ENCODE measurements at regions of chr5 and their contacts with region 1.

Region 1: DNA sequence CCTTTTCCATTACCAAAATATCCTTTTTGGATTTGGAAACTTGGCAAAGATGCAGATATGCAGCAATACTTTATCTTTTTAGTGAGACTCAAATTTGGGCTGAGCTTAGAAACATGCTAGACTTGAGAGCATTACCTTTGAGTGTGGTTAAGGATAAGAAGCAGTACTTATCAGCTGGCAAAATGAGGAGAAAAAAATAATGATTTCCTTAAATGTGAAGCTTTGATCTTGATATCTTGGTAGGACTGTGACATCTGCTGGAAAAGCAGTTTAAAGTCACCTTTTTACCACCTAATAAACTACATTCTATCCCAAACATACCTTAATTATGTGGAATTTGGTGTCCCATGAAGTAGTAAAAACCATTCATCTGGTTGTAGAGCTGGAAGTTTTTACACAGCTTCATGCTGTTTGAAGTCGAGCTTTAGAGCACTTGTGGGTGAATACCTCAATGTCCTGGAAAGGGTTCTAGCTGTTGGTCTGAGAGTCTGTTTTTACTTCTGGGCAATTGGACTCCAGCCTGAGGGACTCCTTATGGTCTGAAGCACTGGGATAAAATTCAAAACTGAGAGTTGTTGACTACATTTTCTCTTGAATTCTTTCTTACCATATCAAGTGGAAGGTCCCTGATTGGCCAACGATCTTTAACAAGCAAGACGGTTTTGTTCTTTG is 53.4 kb downstream of the LRRC70 start:
- DNase-seq: peak in 1 of 5 donors; percentile 2
- H3K4me3 ChIP-seq: no peak overlapping the region
- H3K4me3 Mint-ChIP-seq: no peak overlapping the region
- H3K27ac ChIP-seq: no peak overlapping the region
- H3K27ac Mint-ChIP-seq: peak overlapping the region in 1 of 7 donors; percentile 56
- H3K4me1 ChIP-seq: no peaks in the 10 kb centered on the region
- H3K4me1 Mint-ChIP-seq: no peaks in the 10 kb centered on the region
- H3K27me3 ChIP-seq: no peaks in the 10 kb centered on the region
- H3K27me3 Mint-ChIP-seq: no peaks in the 10 kb centered on the region

Region 2: GRCh38 chr5:62547945-62548630 is 84.0 kb before region 1 on chr5:
- CTCF ChIA-PET with region 1: no interaction called
- POLR2A ChIA-PET with region 1: no interaction called
- intact Hi-C with region 1: loop called (anchors 10 kb)
- DNase-seq: no peak
- H3K4me3 ChIP-seq: no peak overlapping the region
- H3K4me3 Mint-ChIP-seq: no peak overlapping the region
- H3K27ac ChIP-seq: no peak overlapping the region
- H3K27ac Mint-ChIP-seq: peak overlapping the region in 2 of 7 donors; percentile 44 to 49
- H3K4me1 ChIP-seq: no peaks in the 10 kb centered on the region
- H3K4me1 Mint-ChIP-seq: no peaks in the 10 kb centered on the region
- H3K27me3 ChIP-seq: no peaks in the 10 kb centered on the region
- H3K27me3 Mint-ChIP-seq: no peaks in the 10 kb centered on the region

Region 3: GRCh38 chr5:62585751-62586150 is 46.3 kb before region 1 on chr5:
- CTCF ChIA-PET with region 1: no interaction called
- POLR2A ChIA-PET with region 1: no interaction called
- intact Hi-C with region 1: no loop called
- DNase-seq: no peak
- H3K4me3 ChIP-seq: no peak overlapping the region
- H3K4me3 Mint-ChIP-seq: no peak overlapping the region
- H3K27ac ChIP-seq: no peak overlapping the region
- H3K27ac Mint-ChIP-seq: peak overlapping the region in 2 of 7 donors; percentile 8 to 81
- H3K4me1 ChIP-seq: no peaks in the 10 kb centered on the region
- H3K4me1 Mint-ChIP-seq: peaks cover 14 to 34% (median 21%) of the 10 kb centered on the region in 4 donors
- H3K27me3 ChIP-seq: no peaks in the 10 kb centered on the region
- H3K27me3 Mint-ChIP-seq: no peaks in the 10 kb centered on the region